ENCODE measurements at regions of chr10 and their contacts with region 1.

Region 1: GRCh38 chr10:73139251-73139650 is 28.6 kb downstream of the ECD start:
- DNase-seq: no peak
- ATAC-seq: no peak
- H3K4me3 ChIP-seq: no peak overlapping the region
- H3K27ac ChIP-seq: no peak overlapping the region
- H3K4me1 ChIP-seq: peaks cover 3% of the 10 kb centered on the region; the same call in 1 of the 2 replicates
- H3K27me3 ChIP-seq: no peaks in the 10 kb centered on the region
- CTCF ChIP-seq: no peak

Region 2: GRCh38 chr10:72943498-72944234 is 195.6 kb before region 1 on chr10:
- CTCF ChIA-PET with region 1: no interaction called
- POLR2A ChIA-PET with region 1: interaction called, 15 read pairs
- intact Hi-C with region 1: no loop called
- DNase-seq: no peak
- ATAC-seq: no peak
- H3K4me3 ChIP-seq: no peak overlapping the region
- H3K27ac ChIP-seq: no peak overlapping the region
- H3K4me1 ChIP-seq: no peaks in the 10 kb centered on the region
- H3K27me3 ChIP-seq: peaks cover 60% of the 10 kb centered on the region
- CTCF ChIP-seq: no peak

Region 3: DNA sequence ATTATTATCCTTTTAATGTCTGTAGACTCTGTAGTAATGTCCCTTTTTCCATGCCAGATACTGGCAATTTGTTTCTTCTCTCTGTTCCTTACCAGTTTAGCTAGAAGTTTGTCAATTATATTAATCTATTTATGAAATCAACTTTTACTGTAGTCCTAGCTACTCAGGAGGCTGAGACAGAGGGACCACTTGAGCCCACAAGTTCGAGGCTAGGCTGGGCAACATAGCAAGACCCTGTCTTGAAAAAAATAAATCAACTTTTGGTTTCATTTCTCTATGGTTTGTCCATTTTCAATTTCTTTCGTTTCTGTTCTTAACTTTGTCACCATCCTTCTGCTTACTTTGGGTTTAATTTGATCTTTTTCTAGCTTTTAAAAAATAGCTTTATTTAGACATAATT is 142.2 kb before region 1 on chr10:
- CTCF ChIA-PET with region 1: no interaction called
- POLR2A ChIA-PET with region 1: interaction called, 22 read pairs
- intact Hi-C with region 1: no loop called
- DNase-seq: no peak
- ATAC-seq: peak; percentile 10; the same call in 1 of the 2 replicates
- H3K4me3 ChIP-seq: no peak overlapping the region
- H3K27ac ChIP-seq: no peak overlapping the region
- H3K4me1 ChIP-seq: no peaks in the 10 kb centered on the region
- H3K27me3 ChIP-seq: no peaks in the 10 kb centered on the region
- CTCF ChIP-seq: no peak

Region 4: DNA sequence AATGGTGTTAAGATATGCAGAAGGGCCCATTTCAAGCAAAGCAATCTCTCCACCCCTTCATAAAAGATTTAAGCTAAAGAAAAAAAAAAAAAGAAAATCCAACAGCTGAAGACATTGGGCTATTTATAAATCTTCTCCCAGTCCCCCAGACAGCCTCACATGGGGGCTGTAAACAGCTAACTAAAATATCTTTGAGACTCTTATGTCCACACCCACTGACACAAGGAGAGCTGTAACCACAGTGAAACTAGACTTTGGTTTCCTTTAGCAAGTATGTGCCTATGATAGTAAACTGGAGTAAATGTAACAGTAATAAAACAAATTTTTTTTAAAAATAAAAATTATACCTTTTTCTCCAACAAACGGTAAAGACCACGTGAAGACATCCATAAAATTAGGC is 328.0 kb after region 1 on chr10:
- CTCF ChIA-PET with region 1: no interaction called
- POLR2A ChIA-PET with region 1: no interaction called
- intact Hi-C with region 1: no loop called
- DNase-seq: no peak
- ATAC-seq: no peak
- H3K4me3 ChIP-seq: no peak overlapping the region
- H3K27ac ChIP-seq: no peak overlapping the region
- H3K4me1 ChIP-seq: no peaks in the 10 kb centered on the region
- H3K27me3 ChIP-seq: no peaks in the 10 kb centered on the region
- CTCF ChIP-seq: no peak

Region 5: GRCh38 chr10:73517271-73517877 is 378.1 kb after region 1 on chr10:
- CTCF ChIA-PET with region 1: no interaction called
- POLR2A ChIA-PET with region 1: no interaction called
- intact Hi-C with region 1: no loop called
- DNase-seq: peak; percentile 59
- ATAC-seq: peak; percentile 53
- H3K4me3 ChIP-seq: no peak overlapping the region
- H3K27ac ChIP-seq: no peak overlapping the region
- H3K4me1 ChIP-seq: peaks cover 6% of the 10 kb centered on the region; the same call in 1 of the 2 replicates
- H3K27me3 ChIP-seq: no peaks in the 10 kb centered on the region
- CTCF ChIP-seq: no peak